Cardiac septum (tissue), 1 donor: ENCODE measurements at regions of chr4 and their contacts with region 1.

Region 1: DNA sequence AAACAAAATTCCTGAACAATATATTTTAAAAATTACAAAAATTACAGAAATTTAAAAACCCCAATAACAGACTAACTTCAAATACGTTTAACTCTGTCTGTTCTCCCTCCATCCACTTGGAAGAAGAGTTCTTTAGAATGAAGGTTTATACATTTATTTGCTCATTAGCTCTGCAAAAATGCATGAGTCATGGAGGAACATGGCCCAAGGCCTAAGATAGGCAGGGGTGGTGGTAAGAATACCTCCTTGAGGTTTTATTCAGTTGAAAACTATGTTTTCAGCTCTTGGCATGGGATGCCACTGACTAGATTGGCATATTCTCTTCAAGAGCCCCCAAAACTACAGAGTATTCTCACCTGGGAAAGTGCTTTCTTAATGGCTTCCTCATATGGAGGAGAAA is 8.8 kb upstream of the LRRC66 start:
- DNase-seq: no peak

Region 2: GRCh38 chr4:51831133-51831532 is 197.8 kb before region 1 on chr4:
- intact Hi-C with region 1: loop called (anchors 2 kb)
- DNase-seq: peak; percentile 81

Region 3: DNA sequence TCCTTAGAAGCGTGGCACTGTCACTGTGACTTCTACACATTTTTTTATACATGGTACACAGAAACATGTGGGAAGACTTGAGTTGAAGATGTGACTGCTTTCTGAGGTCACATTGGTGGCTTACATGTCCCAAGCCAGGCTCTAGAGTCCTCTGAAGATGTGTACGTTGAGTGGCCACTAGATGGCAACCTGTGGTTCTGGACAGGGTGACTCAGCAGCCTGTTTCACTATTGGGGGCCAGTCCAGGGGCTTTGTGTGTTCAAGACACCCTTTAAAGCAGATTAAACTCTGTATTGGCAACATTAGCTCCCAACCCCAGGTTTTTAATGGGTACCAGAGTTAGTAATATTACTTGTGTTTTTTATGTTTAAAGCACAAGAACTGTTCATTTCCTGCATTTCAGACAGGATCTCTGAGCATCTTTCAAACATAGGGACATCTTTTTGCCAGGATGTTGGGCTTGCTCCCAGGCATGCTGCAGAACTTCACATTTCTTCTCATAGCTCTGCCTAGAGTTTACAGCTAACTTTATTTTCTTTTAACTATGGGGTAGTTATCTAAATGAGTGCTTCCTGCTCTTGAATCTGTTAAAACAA is 133.1 kb before region 1 on chr4:
- intact Hi-C with region 1: loop called (anchors 10 kb)
- DNase-seq: no peak